ENCODE measurements at regions of chr3 and their contacts with region 1.

Region 1: GRCh38 chr3:98259707-98260106 is 4.3 kb upstream of the OR5H6 start:
- DNase-seq: peak; percentile 44
- ATAC-seq: peak; percentile 37; the same call in 1 of the 2 replicates
- H3K4me3 ChIP-seq: no peak overlapping the region
- H3K27ac ChIP-seq: no peak overlapping the region
- H3K4me1 ChIP-seq: no peaks in the 10 kb centered on the region
- H3K27me3 ChIP-seq: peaks cover 8% of the 10 kb centered on the region; the same call in 1 of the 2 replicates
- CTCF ChIP-seq: peak; percentile 52

Region 2: DNA sequence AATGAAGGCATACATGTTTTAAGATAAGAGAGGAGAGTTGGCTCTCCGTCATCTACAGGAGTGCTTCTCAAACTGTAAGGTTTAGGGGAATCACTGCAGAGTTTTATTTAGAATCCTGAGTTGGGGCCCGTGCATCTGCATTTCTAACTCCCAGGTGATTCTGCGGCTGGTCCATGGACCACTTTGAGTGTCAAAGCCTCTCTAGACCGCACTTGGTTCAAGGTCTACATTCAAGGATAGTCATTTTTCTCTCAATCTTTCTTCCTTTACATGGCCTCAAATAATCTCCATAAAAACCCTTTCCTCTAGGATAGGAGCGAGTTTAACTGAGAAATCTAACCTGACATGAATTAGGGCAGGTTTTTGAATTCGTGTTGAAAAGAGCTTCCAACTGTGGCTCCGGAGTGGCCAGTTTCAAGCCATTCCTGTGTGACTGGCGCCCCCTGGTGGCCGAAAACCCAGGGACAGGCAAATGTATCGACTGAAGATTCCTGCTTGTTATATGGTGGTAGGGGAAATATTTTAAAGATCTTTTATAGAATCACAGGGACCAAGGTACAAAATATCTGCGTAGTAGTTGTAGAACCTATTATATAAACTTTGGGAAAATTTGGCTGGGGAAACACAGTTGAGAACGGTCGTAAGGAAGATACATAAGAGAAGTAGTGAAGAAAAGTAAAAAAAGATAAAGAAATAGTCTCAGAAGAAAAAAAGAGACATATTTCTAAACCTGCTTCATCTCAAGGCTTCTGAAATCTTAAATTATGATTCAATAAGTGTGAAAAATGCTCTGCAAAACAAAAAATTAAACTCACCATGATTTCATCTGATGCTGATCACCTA is 236.5 kb before region 1 on chr3:
- CTCF ChIA-PET with region 1: no interaction called
- POLR2A ChIA-PET with region 1: no interaction called
- intact Hi-C with region 1: no loop called
- DNase-seq: peak; percentile 88
- ATAC-seq: peak; percentile 91
- H3K4me3 ChIP-seq: no peak overlapping the region
- H3K27ac ChIP-seq: no peak overlapping the region
- H3K4me1 ChIP-seq: no peaks in the 10 kb centered on the region
- H3K27me3 ChIP-seq: peaks cover 9% of the 10 kb centered on the region; the same call in 1 of the 2 replicates
- CTCF ChIP-seq: peak; percentile 99

Region 3: DNA sequence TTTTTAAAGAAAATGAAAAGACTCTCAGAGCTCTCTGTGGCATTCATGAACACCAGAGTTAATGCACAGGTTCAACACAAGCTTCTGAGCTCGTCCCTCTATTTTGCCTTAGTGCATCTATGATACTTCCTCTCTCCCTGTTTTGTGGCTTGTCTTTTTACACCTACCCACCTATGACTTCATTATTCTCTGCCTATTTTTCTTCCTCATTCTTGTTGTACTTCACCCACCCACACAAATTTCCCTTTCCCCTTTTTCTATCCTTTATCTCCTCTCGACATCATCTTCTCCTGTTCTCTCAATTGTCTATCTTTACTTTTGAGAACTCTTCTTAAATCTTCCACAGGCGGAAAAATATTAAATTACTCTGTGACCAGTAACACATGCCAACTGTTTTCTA is 44.7 kb before region 1 on chr3:
- CTCF ChIA-PET with region 1: no interaction called
- POLR2A ChIA-PET with region 1: no interaction called
- intact Hi-C with region 1: loop called (anchors 1 kb)
- DNase-seq: no peak
- ATAC-seq: no peak
- H3K4me3 ChIP-seq: no peak overlapping the region
- H3K27ac ChIP-seq: no peak overlapping the region
- H3K4me1 ChIP-seq: no peaks in the 10 kb centered on the region
- H3K27me3 ChIP-seq: peaks cover 14% of the 10 kb centered on the region; the same call in 1 of the 2 replicates
- CTCF ChIP-seq: no peak

Region 4: DNA sequence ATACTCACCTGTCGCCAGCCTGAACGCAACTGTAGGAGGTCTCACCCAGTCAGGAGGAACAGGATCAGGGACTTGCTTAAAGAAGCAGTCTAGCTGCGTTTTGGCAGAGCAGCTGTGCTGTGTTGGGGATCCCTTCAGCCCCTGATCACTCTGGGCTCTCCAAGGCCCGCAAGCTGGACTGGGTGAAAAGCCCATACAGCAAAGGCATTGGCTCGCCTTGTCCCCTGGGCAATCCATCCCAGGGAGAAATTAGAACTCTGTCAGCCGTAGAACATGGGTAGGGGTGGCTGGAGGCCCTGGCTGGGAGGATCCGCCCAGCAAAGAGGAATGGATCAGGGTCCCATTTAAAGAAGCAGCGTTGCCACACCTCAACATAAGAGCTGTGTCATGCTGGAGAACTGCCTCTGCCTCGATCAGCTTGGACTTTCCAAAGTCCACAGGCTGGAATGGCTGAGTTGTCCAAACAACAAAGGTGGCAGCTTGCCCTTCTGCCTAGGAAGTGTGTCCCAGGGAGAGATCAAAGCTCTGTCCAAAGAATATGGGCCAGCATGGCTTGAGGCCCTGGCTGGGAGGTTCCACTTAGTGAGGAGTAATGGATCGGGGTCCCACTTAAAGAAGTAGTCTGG is 31.7 kb after region 1 on chr3:
- CTCF ChIA-PET with region 1: no interaction called
- POLR2A ChIA-PET with region 1: no interaction called
- intact Hi-C with region 1: no loop called
- DNase-seq: no peak
- ATAC-seq: no peak
- H3K4me3 ChIP-seq: no peak overlapping the region
- H3K27ac ChIP-seq: no peak overlapping the region
- H3K4me1 ChIP-seq: no peaks in the 10 kb centered on the region
- H3K27me3 ChIP-seq: peaks cover 6% of the 10 kb centered on the region
- CTCF ChIP-seq: no peak